ENCODE measurements at regions of chr2 and their contacts with region 1.

Region 1: DNA sequence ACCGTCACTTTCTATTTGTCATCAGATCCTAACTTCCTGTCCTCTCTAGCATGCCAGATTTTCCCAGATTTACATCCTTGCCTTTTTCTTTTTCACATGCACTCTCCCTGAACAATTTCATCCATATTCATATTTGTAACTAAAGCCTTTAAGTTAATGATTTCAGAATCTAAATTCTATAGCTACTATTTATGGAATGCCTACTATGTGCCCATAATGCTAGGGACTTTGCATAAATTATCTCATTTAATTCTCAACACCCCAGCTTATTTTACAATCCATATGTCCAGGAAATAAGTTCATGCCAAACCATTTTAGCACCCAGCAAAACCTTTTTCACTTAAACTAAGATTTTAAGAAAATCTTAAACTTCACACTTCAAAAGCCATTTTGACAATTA is 531.9 kb downstream of the NUP35 start:
- DNase-seq: no peak
- ATAC-seq: no peak
- H3K4me3 ChIP-seq: no peak overlapping the region
- H3K27ac ChIP-seq: no peak overlapping the region
- H3K4me1 ChIP-seq: no peaks in the 10 kb centered on the region
- H3K27me3 ChIP-seq: no peaks in the 10 kb centered on the region
- CTCF ChIP-seq: no peak

Region 2: GRCh38 chr2:183614799-183615435 is 41.2 kb before region 1 on chr2:
- intact Hi-C with region 1: no loop called
- DNase-seq: peak; percentile 13 to 58
- ATAC-seq: peak; percentile 77 to 99 (median 93)
- H3K4me3 ChIP-seq: peak overlapping the region; percentile 2
- H3K27ac ChIP-seq: peak overlapping the region; percentile 70
- H3K4me1 ChIP-seq: peaks cover 7% of the 10 kb centered on the region
- H3K27me3 ChIP-seq: no peaks in the 10 kb centered on the region
- CTCF ChIP-seq: no peak

Region 3: GRCh38 chr2:183729380-183729779 is 73.3 kb after region 1 on chr2:
- intact Hi-C with region 1: loop called in 1 of 2 experiments (anchors 2 kb)
- DNase-seq: no peak
- ATAC-seq: no peak
- H3K4me3 ChIP-seq: no peak overlapping the region
- H3K27ac ChIP-seq: no peak overlapping the region
- H3K4me1 ChIP-seq: no peaks in the 10 kb centered on the region
- H3K27me3 ChIP-seq: no peaks in the 10 kb centered on the region
- CTCF ChIP-seq: no peak